Calu3 (cell line): ENCODE measurements at regions of chr2 and their contacts with region 1.

Region 1: GRCh38 chr2:105344704-105345345 is 7.5 kb downstream of the C2orf49 start:
- DNase-seq: no peak
- H3K4me3 Mint-ChIP-seq: no peak overlapping the region
- H3K27ac Mint-ChIP-seq: no peak overlapping the region
- H3K4me1 Mint-ChIP-seq: peaks cover 10% of the 10 kb centered on the region
- H3K27me3 Mint-ChIP-seq: no peaks in the 10 kb centered on the region
- CTCF ChIP-seq: no peak

Region 2: GRCh38 chr2:105294844-105295481 is 49.9 kb before region 1 on chr2:
- CTCF ChIA-PET with region 1: no interaction called
- intact Hi-C with region 1: no loop called
- DNase-seq: peak; percentile 61
- H3K4me3 Mint-ChIP-seq: no peak overlapping the region
- H3K27ac Mint-ChIP-seq: no peak overlapping the region
- H3K4me1 Mint-ChIP-seq: no peaks in the 10 kb centered on the region
- H3K27me3 Mint-ChIP-seq: no peaks in the 10 kb centered on the region
- CTCF ChIP-seq: peak; percentile 54

Region 3: GRCh38 chr2:105977212-105977611 is 632.4 kb after region 1 on chr2:
- CTCF ChIA-PET with region 1: no interaction called
- intact Hi-C with region 1: loop called (anchors 10 kb)
- DNase-seq: peak; percentile 69
- H3K4me3 Mint-ChIP-seq: no peak overlapping the region
- H3K27ac Mint-ChIP-seq: peak overlapping the region; percentile 75
- H3K4me1 Mint-ChIP-seq: peaks cover 14% of the 10 kb centered on the region
- H3K27me3 Mint-ChIP-seq: no peaks in the 10 kb centered on the region
- CTCF ChIP-seq: no peak